ENCODE measurements at regions of chr3 and their contacts with region 1.

Region 1: DNA sequence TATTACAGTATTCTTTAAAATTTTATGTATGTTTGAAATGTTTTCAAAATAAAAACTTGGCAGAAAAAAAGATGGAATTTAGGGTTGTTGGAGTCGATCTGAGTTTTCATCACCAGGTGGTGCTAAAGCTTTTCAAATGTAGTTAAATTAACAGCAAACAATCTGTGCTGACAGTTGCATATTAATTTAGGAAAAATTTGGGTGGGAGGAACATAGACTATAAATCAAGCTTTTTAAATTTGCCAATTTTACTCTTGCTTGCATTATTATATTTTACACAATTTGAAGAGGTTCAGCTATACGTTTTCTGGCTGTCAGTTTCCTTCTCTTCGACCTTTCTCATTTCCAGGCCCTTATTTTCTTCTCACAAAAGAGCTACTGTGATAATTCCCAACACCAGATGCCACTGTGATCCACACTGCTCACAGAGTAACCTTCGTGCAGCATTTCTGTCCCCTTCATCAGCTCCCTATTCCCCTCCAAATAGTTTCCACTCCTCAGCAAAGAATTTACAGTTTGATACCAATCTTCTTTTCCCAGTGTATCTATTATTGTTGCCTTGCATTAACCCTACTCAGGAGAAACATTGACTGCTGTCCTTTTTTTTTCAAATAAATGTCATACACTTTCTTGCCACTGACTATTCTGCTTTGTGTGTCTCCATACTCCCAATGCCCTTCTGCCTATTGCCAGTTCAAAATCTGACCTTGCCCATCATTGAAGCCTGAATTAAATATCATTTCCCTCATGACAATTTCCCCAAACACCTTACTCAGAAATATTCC is 53.4 kb upstream of the EIF5A2 start:
- DNase-seq: peak; percentile 24
- ATAC-seq: no peak
- H3K4me3 ChIP-seq: no peak overlapping the region
- H3K4me3 Mint-ChIP-seq: no peak overlapping the region
- H3K27ac ChIP-seq: no peak overlapping the region
- H3K27ac Mint-ChIP-seq: no peak overlapping the region
- H3K4me1 ChIP-seq: no peaks in the 10 kb centered on the region
- H3K4me1 Mint-ChIP-seq: no peaks in the 10 kb centered on the region
- H3K27me3 ChIP-seq: no peaks in the 10 kb centered on the region
- H3K27me3 Mint-ChIP-seq: peaks cover 4% of the 10 kb centered on the region
- CTCF ChIP-seq: peak; percentile 62

Region 2: DNA sequence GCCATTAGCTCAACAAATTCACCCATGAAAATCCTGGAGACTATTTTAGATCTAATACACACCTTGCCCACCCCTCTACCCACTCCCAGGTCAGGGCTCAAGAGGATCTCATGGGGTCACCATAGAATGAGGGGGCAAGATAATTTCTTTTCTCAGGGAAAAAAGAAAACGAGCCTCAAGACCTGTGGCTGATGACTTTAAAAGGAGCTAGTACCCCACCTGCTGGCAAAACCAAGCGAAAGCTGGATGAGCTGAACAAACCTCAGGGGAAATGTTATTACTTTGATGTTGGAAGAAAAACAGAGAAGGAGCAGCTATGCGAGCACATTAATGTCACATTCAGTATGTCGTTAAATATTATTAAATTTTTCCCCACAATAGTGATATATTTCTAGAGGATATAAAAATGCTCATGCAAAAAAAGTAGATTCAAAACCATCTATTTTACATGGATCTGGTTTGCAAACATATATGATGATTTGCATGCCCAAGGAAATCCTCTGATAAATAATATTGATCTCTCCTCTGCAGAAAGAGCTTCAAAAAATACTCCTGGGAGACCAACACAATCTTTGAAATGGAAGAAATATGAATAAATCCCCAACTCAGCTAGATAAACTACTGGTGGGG is 810.7 kb after region 1 on chr3:
- CTCF ChIA-PET with region 1: interaction called, 6 read pairs
- POLR2A ChIA-PET with region 1: no interaction called
- intact Hi-C with region 1: loop called (anchors 2 kb)
- DNase-seq: peak; percentile 15
- ATAC-seq: no peak
- H3K4me3 ChIP-seq: no peak overlapping the region
- H3K4me3 Mint-ChIP-seq: no peak overlapping the region
- H3K27ac ChIP-seq: no peak overlapping the region
- H3K27ac Mint-ChIP-seq: no peak overlapping the region
- H3K4me1 ChIP-seq: no peaks in the 10 kb centered on the region
- H3K4me1 Mint-ChIP-seq: no peaks in the 10 kb centered on the region
- H3K27me3 ChIP-seq: no peaks in the 10 kb centered on the region
- H3K27me3 Mint-ChIP-seq: peaks cover 7% of the 10 kb centered on the region
- CTCF ChIP-seq: peak; percentile 33

Region 3: GRCh38 chr3:172476347-172476746 is 1514.5 kb after region 1 on chr3:
- CTCF ChIA-PET with region 1: no interaction called
- POLR2A ChIA-PET with region 1: no interaction called
- intact Hi-C with region 1: loop called (anchors 5 kb)
- DNase-seq: no peak
- ATAC-seq: no peak
- H3K4me3 ChIP-seq: no peak overlapping the region
- H3K4me3 Mint-ChIP-seq: peak overlapping the region; percentile 70
- H3K27ac ChIP-seq: no peak overlapping the region
- H3K27ac Mint-ChIP-seq: no peak overlapping the region
- H3K4me1 ChIP-seq: no peaks in the 10 kb centered on the region
- H3K4me1 Mint-ChIP-seq: peaks cover 9% of the 10 kb centered on the region
- H3K27me3 ChIP-seq: no peaks in the 10 kb centered on the region
- H3K27me3 Mint-ChIP-seq: no peaks in the 10 kb centered on the region
- CTCF ChIP-seq: no peak

Measured in B cell (primary cell).